Caco-2 (cell line): ENCODE measurements at regions of chr11 and their contacts with region 1.

Region 1: DNA sequence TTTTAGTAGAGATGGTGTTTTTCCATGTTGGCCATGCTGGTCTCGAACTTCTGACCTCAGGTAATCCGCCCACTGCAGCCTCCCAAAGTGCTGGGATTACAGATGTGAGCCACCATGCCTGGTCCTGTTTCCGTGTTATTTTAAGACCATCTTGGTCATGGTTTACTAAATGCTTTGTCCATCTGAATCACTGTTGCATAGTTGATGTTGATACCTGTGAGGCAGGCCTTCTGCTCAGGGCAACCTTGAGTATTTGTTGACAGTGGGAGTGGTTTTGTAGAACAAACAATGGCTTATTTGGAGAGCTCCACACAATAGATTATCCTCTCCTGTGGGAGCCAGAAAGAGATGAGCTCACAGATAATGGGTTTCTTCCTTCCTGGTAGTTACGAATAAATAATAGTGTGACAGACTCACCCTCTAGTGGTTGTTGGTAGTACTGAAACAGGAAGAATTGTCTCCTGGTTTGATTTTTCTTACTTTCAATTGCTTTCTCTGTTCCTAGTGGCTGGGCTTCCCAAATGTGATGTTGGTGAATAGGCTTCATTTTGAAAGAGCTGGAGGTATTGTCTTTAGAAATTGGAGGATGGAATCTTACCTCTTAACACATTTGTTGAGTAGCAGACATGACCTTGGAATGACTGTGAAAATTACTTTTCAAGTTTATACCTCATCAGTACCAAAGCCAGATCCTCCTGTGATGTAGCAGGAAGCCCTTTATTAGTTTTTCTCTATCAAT is 39.0 kb downstream of the CTNND1 start:
- DNase-seq: peak; percentile 77 to 85
- H3K4me3 ChIP-seq: no peak overlapping the region
- H3K4me3 Mint-ChIP-seq: peak overlapping the region; percentile 38
- H3K27ac Mint-ChIP-seq: peak overlapping the region; percentile 64
- H3K4me1 ChIP-seq: peaks cover 25% of the 10 kb centered on the region
- H3K4me1 Mint-ChIP-seq: peaks cover 33% of the 10 kb centered on the region
- H3K27me3 ChIP-seq: no peaks in the 10 kb centered on the region
- H3K27me3 Mint-ChIP-seq: no peaks in the 10 kb centered on the region
- CTCF ChIP-seq: peak; percentile 78 to 82

Region 2: GRCh38 chr11:57493507-57494503 is 306.8 kb before region 1 on chr11:
- CTCF ChIA-PET with region 1: no interaction called
- POLR2A ChIA-PET with region 1: no interaction called
- intact Hi-C with region 1: no loop called
- DNase-seq: peak; percentile 95 to 96
- H3K4me3 ChIP-seq: no peak overlapping the region
- H3K4me3 Mint-ChIP-seq: peak overlapping the region; percentile 25
- H3K27ac Mint-ChIP-seq: peak overlapping the region; percentile 96
- H3K4me1 ChIP-seq: peaks cover 40% of the 10 kb centered on the region
- H3K4me1 Mint-ChIP-seq: peaks cover 28% of the 10 kb centered on the region
- H3K27me3 ChIP-seq: no peaks in the 10 kb centered on the region
- H3K27me3 Mint-ChIP-seq: no peaks in the 10 kb centered on the region
- CTCF ChIP-seq: peak; percentile 95 to 97

Region 3: GRCh38 chr11:57667736-57668435 is 132.7 kb before region 1 on chr11 and contains the start of gene ZDHHC5:
- CTCF ChIA-PET with region 1: interaction called, 8 read pairs
- POLR2A ChIA-PET with region 1: no interaction called
- intact Hi-C with region 1: loop called (anchors 2 kb)
- DNase-seq: peak; percentile 100
- H3K4me3 ChIP-seq: peak within 1 kb of the TSS; percentile 74
- H3K4me3 Mint-ChIP-seq: peak within 1 kb of the TSS; percentile 99
- H3K27ac Mint-ChIP-seq: peak within 1 kb of the TSS; percentile 100
- H3K4me1 ChIP-seq: peaks cover 14% of the 10 kb centered on the region; the same call in 1 of the 2 replicates
- H3K4me1 Mint-ChIP-seq: peaks cover 12% of the 10 kb centered on the region
- H3K27me3 ChIP-seq: no peaks in the 10 kb centered on the region
- H3K27me3 Mint-ChIP-seq: no peaks in the 10 kb centered on the region
- CTCF ChIP-seq: peak; percentile 4 to 46
- total RNA-seq, gene ZDHHC5: 66.0 and 72.2 TPM in 2 replicates

Region 4: GRCh38 chr11:57741132-57742086 is 59.2 kb before region 1 on chr11 and contains the start of gene SELENOH:
- CTCF ChIA-PET with region 1: interaction called, 14 read pairs
- POLR2A ChIA-PET with region 1: interaction called, 12 read pairs
- intact Hi-C with region 1: loop called (anchors 1 kb)
- DNase-seq: peak; percentile 98 to 99
- H3K4me3 ChIP-seq: peak within 1 kb of the TSS; percentile 83
- H3K4me3 Mint-ChIP-seq: peak within 1 kb of the TSS; percentile 94
- H3K27ac Mint-ChIP-seq: peak within 1 kb of the TSS; percentile 98
- H3K4me1 ChIP-seq: peaks cover 5% of the 10 kb centered on the region
- H3K4me1 Mint-ChIP-seq: peaks cover 1% of the 10 kb centered on the region
- H3K27me3 ChIP-seq: no peaks in the 10 kb centered on the region
- H3K27me3 Mint-ChIP-seq: no peaks in the 10 kb centered on the region
- CTCF ChIP-seq: no peak
- total RNA-seq, gene SELENOH: 174 and 175 TPM in 2 replicates

Region 5: GRCh38 chr11:57761301-57762234 is 39.0 kb before region 1 on chr11 and contains the start of gene CTNND1:
- CTCF ChIA-PET with region 1: interaction called, 79 read pairs
- POLR2A ChIA-PET with region 1: interaction called, 57 read pairs
- intact Hi-C with region 1: loop called (anchors 1 kb)
- DNase-seq: peak; percentile 94 to 96
- H3K4me3 ChIP-seq: peak within 1 kb of the TSS; percentile 84
- H3K4me3 Mint-ChIP-seq: peak within 1 kb of the TSS; percentile 96
- H3K27ac Mint-ChIP-seq: peak within 1 kb of the TSS; percentile 98
- H3K4me1 ChIP-seq: peaks cover 27% of the 10 kb centered on the region
- H3K4me1 Mint-ChIP-seq: peaks cover 27% of the 10 kb centered on the region
- H3K27me3 ChIP-seq: no peaks in the 10 kb centered on the region
- H3K27me3 Mint-ChIP-seq: no peaks in the 10 kb centered on the region
- CTCF ChIP-seq: peak in 1 of 2 experiments; percentile 23
- total RNA-seq, gene CTNND1: 223 and 225 TPM in 2 replicates

Region 6: DNA sequence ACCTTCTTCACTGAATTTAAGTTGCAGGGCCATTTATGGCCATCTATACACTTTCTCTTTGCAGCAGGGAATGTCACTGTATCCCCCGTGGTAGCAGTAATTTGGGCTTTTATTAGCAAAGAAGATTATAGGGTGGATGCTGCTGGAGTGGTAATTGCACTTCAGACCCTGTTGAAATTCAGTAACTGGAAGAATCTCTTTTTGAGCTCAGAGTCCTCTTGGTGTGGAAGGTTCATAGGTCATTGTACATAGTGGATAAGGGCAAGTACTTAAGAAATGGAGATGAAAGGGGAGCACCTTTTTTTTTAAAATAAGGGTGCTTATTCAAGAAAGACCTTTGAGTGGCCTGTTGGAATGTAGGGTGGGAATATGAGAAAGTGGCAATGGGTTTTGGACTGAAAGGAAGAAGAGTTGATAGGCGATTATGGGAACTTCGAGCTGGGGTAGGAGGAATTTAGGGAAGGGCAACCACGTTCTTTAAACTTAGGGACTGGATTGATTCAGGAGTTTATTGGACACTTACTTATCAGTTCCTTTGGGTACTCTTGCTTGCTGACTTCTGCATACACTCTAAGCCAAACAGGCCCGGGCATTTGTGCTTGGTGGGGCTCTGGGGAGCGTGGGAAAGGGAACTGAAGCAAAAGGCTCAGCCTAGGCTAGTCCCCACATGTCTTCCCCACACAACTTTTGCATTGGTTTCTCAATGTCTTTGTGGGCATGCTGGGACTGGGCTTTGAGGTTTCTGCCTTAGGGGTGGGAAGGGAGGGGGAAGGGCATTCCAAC is 12.5 kb before region 1 on chr11:
- CTCF ChIA-PET with region 1: interaction called, 20 read pairs
- POLR2A ChIA-PET with region 1: interaction called, 9 read pairs
- intact Hi-C with region 1: loop called (anchors 1 kb)
- DNase-seq: peak; percentile 62 to 77
- H3K4me3 ChIP-seq: no peak overlapping the region
- H3K4me3 Mint-ChIP-seq: peak overlapping the region; percentile 64
- H3K27ac Mint-ChIP-seq: peak overlapping the region; percentile 86
- H3K4me1 ChIP-seq: peaks cover 95% of the 10 kb centered on the region
- H3K4me1 Mint-ChIP-seq: peaks cover 49% of the 10 kb centered on the region
- H3K27me3 ChIP-seq: no peaks in the 10 kb centered on the region
- H3K27me3 Mint-ChIP-seq: no peaks in the 10 kb centered on the region
- CTCF ChIP-seq: no peak

Region 7: DNA sequence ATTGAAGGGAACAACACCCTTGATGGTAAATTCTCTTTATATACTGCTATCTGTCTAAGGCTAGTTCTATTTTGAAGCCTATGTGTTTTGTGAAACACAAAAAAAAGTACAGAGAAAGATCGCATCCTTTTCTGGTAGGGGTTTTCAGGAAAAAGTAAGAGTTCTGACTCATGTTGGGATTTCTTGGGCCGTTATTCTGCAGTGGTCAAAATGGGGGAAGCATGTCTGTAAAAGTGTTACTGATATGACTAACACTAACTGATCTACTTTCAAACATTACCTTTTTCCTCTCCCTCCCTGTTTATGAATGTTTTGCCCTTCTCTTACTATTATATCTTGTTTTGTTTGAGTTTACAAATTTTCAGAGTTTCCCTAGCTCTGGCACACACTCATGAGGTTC is 14.9 kb after region 1 on chr11:
- CTCF ChIA-PET with region 1: no interaction called
- POLR2A ChIA-PET with region 1: no interaction called
- intact Hi-C with region 1: no loop called
- DNase-seq: no peak
- H3K4me3 ChIP-seq: no peak overlapping the region
- H3K4me3 Mint-ChIP-seq: no peak overlapping the region
- H3K27ac Mint-ChIP-seq: no peak overlapping the region
- H3K4me1 ChIP-seq: no peaks in the 10 kb centered on the region
- H3K4me1 Mint-ChIP-seq: peaks cover 10% of the 10 kb centered on the region
- H3K27me3 ChIP-seq: no peaks in the 10 kb centered on the region
- H3K27me3 Mint-ChIP-seq: no peaks in the 10 kb centered on the region
- CTCF ChIP-seq: no peak